Dorsolateral prefrontal cortex (tissue), 120 donors: ENCODE measurements at regions of chr15 and their contacts with region 1.

Region 1: GRCh38 chr15:75453703-75454470 is 2.4 kb upstream of the SIN3A start:
- DNase-seq: peak; percentile 94 to 99 (median 98)
- H3K4me3 ChIP-seq: peak overlapping the region; percentile 60 to 98 (median 91)
- H3K27ac ChIP-seq: peak overlapping the region; percentile 65 to 99 (median 95)
- H3K27me3 ChIP-seq: no peaks in the 10 kb centered on the region
- CTCF ChIP-seq: peak in 22 of 56 donors; percentile 8 to 43 (median 16)

Region 2: DNA sequence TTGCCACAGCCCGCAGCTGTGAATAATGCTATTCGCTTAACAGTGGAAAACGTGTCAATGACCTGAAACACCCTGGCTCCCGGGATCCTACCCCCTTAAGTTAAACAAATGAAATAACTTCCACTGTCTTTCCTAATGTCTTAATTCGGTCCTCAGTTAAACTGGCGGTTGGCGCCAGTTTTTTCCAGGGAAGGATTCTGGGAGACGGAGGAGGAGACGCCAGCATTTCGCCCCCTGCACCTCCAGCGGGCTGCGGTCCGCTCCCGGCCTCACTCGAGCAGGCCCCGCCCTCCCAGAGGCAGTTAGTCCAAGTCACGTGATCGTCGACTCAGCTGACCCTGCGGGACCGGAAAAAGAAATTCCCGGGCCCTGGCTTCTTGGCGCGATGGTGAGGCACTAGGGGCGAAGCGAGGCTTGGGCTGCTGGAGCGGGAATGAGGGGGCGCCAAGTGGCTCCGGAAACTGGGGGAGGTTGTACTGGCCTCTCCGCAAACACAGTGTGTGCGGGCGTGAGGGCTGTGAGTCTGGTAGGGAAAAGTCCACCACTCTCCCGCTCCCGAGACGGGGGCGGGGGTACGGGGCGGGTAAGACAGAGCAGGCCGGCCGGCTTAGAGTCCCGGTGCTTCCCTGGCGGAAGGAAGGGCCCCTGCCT is 118.1 kb before region 1 on chr15 and contains the start of gene COMMD4:
- intact Hi-C with region 1: loop called in 1 of 2 experiments (anchors 10 kb)
- DNase-seq: peak; percentile 93 to 97 (median 96)
- H3K4me3 ChIP-seq: peak within 1 kb of the TSS; percentile 70 to 98 (median 90)
- H3K27ac ChIP-seq: peak within 1 kb of the TSS in 54 of 59 donors; percentile 19 to 86 (median 71)
- H3K27me3 ChIP-seq: no peaks in the 10 kb centered on the region
- CTCF ChIP-seq: peak in 38 of 56 donors; percentile 12 to 57 (median 23)
- total RNA-seq, gene COMMD4: 26.8 to 67.8 (median 44.8) TPM

Region 3: DNA sequence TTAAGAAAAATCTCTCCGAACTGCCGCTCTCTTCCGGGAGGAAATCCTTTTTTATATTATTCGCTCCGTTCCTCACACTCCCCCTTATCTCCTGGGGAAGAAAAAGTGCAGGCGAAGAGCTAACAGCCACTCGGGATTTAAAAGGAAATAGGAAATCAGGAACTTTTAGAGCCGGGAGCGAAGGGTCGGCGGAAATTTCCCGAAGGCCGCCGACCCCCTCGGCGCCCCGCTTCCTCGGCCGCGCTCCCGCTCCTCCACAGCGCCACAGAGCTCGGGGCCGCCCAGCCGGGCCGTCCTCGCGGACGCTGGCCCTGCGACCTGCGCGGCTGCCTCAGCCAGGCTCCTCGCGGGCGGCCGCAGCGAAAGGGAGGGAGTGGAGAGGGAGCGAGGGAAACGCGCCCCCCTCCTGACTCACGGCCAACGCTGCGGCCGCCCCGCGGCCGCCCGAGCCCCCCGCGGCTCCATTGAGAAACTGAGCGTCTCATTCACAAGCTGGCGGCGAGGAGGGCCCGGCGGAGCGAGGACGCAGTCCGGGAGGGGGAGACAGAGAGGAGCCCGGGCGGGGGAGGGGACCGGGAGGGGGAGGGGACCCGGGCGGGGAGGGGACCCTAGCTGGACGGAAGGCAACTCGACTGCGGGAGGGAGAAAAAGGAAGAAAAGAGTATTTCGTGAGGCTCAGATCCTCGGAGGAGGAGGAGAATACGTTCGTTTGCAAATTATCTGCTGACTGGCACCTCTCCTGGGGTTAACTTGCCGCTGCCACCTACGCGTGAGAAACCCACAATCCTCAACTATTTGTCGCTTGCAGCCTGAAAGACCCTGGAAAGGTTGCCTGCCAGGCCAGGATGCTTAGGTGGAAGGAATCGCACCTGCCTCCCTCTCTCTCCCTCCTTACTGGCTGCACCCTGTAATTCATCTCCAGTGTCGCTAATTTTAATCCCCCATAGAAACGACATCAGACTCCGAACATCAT is 125.3 kb after region 1 on chr15 and contains the start of gene PTPN9:
- intact Hi-C with region 1: loop called (anchors 2 kb)
- DNase-seq: peak; percentile 65 to 85 (median 81)
- H3K4me3 ChIP-seq: peak within 1 kb of the TSS; percentile 64 to 97 (median 88)
- H3K27ac ChIP-seq: peak within 1 kb of the TSS; percentile 45 to 98 (median 93)
- H3K27me3 ChIP-seq: no peaks in the 10 kb centered on the region
- CTCF ChIP-seq: peak in 53 of 56 donors; percentile 3 to 59 (median 43)
- total RNA-seq, gene PTPN9: 17.1 to 54.6 (median 33.8) TPM

Region 4: DNA sequence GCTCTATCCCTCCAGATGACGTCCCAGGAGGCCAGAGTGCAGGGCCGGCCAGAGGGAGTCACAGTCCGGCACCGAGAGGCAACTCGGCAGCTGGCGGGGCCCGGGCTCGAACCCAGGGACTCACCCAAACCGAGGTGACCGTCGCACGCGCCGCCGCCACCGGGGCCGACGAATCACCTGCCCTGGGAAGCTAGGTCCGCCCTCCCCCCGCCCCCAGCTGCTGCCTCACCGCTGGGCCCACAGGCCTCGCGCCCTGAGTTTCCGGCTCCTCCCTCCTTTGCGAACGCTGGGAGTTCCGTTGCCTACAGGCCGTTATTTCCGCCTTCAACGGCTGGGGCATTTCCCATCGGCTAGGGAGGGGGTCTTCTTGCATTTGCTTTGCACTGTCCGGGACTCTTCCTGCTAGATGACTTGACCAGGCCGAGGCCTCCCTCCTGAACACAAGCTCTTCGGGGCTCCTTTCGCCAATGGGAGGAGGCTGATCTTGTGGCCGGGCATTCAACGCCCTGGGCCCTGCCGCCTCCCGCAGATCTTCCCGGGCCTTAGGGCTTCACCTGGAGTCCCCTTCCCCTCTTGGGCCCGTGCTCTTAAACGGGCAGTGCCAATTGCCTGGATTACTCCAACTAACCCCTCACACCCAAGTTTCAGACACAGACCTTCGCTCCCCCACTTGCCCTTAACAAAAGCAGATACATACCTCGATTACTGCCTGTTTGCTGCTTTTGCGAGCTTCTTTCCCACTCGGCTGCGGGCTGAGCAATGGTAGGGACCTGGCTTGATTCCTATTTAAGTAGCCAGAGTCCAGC is 171.9 kb after region 1 on chr15 and contains the start of gene SNUPN:
- intact Hi-C with region 1: loop called (anchors 2 kb)
- DNase-seq: peak; percentile 82 to 95 (median 92)
- H3K4me3 ChIP-seq: peak within 1 kb of the TSS; percentile 62 to 99 (median 94)
- H3K27ac ChIP-seq: peak within 1 kb of the TSS; percentile 81 to 99 (median 96)
- H3K27me3 ChIP-seq: no peaks in the 10 kb centered on the region
- CTCF ChIP-seq: peak in 26 of 56 donors; percentile 8 to 51 (median 24)
- total RNA-seq, gene SNUPN: 20.8 to 41.9 (median 29.4) TPM

Region 5: DNA sequence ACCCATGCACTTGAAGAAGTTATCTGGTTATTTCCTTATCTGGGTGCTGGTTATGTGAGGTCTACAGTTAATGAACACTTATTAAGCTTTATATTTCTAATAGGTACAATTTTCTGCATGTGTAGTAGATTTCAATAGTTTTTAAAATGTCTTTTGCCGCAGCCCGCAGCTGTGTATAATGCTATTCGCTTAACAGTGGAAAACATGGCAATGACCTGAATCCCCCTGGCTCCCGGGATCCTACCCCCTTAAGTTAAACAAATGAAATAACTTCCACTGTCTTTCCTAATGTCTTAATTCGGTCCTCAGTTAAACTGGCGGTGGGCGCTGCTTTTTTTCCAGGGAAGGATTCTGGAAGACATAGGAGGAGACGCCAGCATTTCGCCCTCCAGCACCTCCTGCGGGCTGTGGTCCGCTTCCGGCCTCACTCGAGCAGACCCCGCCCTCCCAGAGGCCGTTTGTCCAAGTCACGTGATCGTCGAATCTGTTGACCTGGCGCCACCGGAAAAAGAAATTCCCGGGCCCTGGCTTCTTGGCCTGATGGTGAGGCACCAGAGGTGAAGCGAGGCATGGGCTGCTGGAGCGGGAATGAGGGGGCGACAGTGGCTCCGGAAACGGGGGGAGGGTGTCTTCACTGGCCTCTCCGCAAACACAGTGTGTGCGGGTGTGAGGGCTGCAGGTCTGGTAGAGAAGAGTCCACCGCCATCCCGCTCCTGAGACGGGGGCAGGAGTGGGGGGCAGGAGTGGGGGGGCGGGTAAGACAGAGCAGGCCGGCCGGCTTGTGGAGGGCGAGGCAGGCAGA is 304.4 kb after region 1 on chr15:
- intact Hi-C with region 1: loop called in 1 of 2 experiments (anchors 5 kb)
- DNase-seq: peak; percentile 76 to 92 (median 88)
- H3K4me3 ChIP-seq: peak overlapping the region; percentile 48 to 88 (median 70)
- H3K27ac ChIP-seq: peak overlapping the region in 56 of 59 donors; percentile 5 to 92 (median 78)
- H3K27me3 ChIP-seq: no peaks in the 10 kb centered on the region
- CTCF ChIP-seq: peak in 40 of 56 donors; percentile 4 to 61 (median 42)